ENCODE measurements at regions of chr3 and their contacts with region 1.

Region 1: DNA sequence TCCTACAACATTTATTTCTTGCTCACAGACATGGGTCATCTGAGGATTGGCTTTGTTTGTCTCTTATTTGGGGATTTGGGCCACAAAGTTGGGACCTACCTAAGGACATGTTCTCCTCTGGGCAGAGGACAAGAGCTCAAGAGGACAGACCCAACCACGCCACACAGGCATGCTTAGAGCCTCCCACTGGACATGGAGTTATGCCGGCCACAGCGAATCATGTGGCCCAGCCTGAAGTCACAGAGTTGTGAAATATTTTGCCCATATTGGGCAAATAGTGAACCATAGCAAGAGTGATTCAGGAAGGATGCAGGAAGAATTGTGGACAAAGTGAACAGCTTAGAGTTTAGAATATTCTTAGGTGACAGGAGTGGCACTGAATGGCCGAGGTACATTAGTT is 9.9 kb downstream of the TRAK1 start:
- DNase-seq: no peak
- H3K4me3 ChIP-seq: no peak overlapping the region
- H3K27ac ChIP-seq: peak overlapping the region in 27 of 59 donors; percentile 1 to 71 (median 32)
- H3K27me3 ChIP-seq: no peaks in the 10 kb centered on the region
- CTCF ChIP-seq: no peak

Region 2: DNA sequence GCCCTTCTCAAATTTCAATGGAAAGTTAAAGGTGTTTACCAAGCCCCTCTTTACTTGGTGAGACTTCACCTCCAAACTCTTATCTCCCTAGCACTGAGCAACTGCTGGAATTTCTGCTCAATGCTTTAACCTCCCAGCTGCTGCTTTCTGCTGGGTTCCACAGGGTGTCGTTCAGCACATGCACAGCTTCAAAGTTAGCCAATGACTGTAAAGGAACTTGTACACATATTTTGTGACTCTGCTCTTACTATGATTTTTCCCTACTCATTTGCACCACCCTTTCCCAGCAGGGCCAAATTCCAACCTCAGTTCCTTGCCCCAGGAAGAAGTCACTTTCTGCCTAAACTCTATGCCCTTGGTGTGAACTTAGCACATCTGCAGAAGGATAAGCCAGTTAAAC is 228.9 kb before region 1 on chr3:
- intact Hi-C with region 1: no loop called
- DNase-seq: no peak
- H3K4me3 ChIP-seq: no peak overlapping the region
- H3K27ac ChIP-seq: no peak overlapping the region
- H3K27me3 ChIP-seq: no peaks in the 10 kb centered on the region
- CTCF ChIP-seq: no peak

Region 3: DNA sequence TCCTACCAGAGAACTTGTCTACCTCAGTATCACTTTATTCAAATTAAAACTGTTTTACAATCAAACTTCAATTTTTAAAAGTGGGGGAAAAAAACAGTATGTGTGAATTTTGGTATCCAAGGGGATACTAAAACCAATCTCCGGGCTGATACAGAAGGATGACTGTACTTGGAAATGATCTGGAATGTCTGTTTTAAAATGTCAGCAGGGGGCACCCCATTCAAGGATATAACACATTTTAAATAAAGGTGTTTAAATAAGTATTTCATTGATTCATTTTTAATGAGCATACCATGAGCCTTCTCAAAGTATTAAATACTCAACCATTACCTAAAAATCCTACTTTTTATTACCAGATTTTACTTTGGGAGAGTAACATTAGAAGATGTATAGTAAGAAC is 207.1 kb before region 1 on chr3:
- intact Hi-C with region 1: loop called (anchors 2 to 5 kb)
- DNase-seq: peak in 1 of 10 donors; percentile 22
- H3K4me3 ChIP-seq: no peak overlapping the region
- H3K27ac ChIP-seq: no peak overlapping the region
- H3K27me3 ChIP-seq: no peaks in the 10 kb centered on the region
- CTCF ChIP-seq: peak; percentile 23 to 86 (median 59)

Region 4: DNA sequence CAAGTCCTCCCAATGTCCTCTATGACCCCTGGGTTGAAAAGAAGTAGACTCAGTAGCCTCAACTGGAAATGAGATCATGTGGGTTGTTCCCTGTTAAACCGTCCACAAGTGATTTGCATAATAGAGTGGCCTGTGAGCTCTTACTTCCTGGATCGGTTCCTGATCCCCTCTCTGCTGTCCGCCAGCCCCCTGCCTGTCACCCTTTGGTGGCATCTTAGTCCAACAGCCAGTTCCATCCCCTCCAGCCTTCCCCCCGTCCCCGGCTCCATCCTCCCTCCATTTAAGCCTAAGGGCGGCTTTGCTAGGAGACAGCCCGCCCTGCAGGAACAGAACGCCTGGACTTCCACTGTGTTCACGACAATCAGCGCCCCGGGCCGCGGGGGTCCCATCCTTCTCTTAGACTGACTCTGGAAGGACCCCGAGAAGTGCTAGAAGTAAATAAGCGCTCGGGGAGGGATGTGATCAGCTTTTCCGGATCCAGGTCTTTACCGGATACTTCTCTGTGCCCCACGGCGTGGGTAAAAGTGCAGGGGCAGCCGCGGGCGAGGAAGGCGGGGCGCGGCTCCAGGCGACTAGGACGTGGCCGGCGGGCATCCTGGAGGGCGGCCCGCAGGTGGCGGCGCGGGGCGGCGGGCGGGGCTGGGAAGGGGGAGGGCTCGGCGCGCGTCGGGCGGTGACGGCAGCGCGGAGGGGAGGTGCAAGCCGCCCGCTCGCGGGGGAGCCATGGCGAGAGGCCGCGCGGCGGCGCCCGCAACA is 87.9 kb before region 1 on chr3:
- intact Hi-C with region 1: loop called (anchors 5 kb)
- DNase-seq: peak in 9 of 10 donors; percentile 44 to 77 (median 60)
- H3K4me3 ChIP-seq: peak overlapping the region; percentile 46 to 98 (median 75)
- H3K27ac ChIP-seq: peak overlapping the region in 57 of 59 donors; percentile 14 to 91 (median 83)
- H3K27me3 ChIP-seq: no peaks in the 10 kb centered on the region
- CTCF ChIP-seq: peak in 5 of 56 donors; percentile 6 to 40 (median 16)

Region 5: GRCh38 chr3:42025370-42026138 is 75.5 kb before region 1 on chr3:
- intact Hi-C with region 1: loop called in 1 of 2 experiments (anchors 2 kb)
- DNase-seq: peak; percentile 53 to 95 (median 88)
- H3K4me3 ChIP-seq: peak overlapping the region in 45 of 59 donors; percentile 0 to 52 (median 24)
- H3K27ac ChIP-seq: peak overlapping the region; percentile 15 to 91 (median 77)
- H3K27me3 ChIP-seq: no peaks in the 10 kb centered on the region
- CTCF ChIP-seq: peak in 9 of 56 donors; percentile 7 to 35 (median 17)

Region 6: DNA sequence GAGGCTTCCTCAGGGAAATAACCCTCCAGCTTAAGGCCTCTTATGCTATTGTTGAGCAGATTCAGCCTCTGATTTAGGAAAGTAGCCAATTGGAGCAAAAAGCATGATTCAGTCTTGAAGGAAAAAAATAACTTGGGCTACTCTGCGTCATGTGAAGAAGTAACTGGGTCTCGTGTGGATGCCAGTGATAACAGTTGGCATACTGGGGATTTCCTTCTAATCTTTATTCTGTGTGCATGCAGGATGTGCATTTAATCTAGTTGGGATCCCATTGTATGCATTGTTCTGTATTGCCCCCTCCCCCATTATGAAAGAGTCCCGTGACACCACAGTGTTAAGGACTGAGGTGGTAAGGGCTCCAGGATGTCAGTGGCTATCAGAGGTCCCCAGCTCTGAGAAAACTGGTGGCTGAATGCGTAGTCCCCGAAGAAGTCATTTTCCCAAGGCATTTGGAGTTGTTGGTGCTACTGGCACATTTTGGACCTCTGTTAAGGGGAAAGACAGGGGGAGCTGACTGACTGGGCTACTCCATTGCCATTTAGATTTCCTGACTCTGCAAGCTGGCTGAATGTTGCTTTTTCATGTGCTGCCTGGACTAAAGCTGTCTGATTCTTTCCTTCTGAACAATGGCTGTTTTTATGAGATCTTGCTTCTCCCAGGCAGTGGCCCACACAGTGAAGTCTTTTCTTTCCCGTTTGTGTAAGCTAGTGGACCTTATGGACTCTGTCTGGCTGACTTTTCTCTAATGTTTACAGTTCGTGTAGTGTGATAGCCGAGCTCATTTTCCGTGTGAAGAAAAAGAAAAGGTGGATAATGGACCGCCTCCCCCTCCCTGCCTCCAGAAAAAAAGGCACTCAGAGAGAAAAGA is 48.3 kb before region 1 on chr3:
- intact Hi-C with region 1: loop called in 1 of 2 experiments (anchors 5 kb)
- DNase-seq: peak in 5 of 10 donors; percentile 24 to 71 (median 37)
- H3K4me3 ChIP-seq: peak overlapping the region in 29 of 59 donors; percentile 0 to 43 (median 20)
- H3K27ac ChIP-seq: peak overlapping the region in 56 of 59 donors; percentile 0 to 90 (median 70)
- H3K27me3 ChIP-seq: no peaks in the 10 kb centered on the region
- CTCF ChIP-seq: peak in 51 of 56 donors; percentile 6 to 72 (median 42)

Region 7: GRCh38 chr3:42336103-42336502 is 235.1 kb after region 1 on chr3:
- intact Hi-C with region 1: no loop called
- DNase-seq: no peak
- H3K4me3 ChIP-seq: no peak overlapping the region
- H3K27ac ChIP-seq: no peak overlapping the region
- H3K27me3 ChIP-seq: peaks cover 0 to 3% (median 0%) of the 10 kb centered on the region in 45 donors
- CTCF ChIP-seq: no peak

Region 8: DNA sequence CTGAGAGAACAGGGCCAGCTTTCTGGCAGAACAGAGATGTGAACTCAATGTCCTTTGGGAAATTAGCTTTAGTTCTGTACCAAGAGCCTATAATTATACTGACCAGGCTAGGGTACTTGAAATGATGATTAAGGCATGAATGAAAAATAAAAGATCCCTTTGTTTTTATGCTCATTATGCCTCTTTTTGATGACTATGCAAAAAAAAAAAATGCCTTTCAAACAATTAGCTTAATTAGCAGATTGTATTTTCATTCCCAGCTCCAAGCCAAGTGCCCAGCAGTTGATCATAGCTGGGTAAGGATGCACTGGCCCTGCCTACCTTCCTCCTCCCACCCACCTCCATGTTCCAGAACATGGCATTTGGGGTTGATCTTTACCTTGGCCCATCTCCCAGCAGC is 252.6 kb after region 1 on chr3:
- intact Hi-C with region 1: no loop called
- DNase-seq: no peak
- H3K4me3 ChIP-seq: no peak overlapping the region
- H3K27ac ChIP-seq: peak overlapping the region in 4 of 59 donors; percentile 7 to 55 (median 16)
- H3K27me3 ChIP-seq: no peaks in the 10 kb centered on the region
- CTCF ChIP-seq: no peak

Measured in dorsolateral prefrontal cortex (tissue), 120 donors.